ENCODE measurements at regions of chr2 and their contacts with region 1.

Region 1: GRCh38 chr2:73828818-73829570 is at the start of gene STAMBP:
- DNase-seq: peak; percentile 95
- H3K4me3 Mint-ChIP-seq: peak within 1 kb of the TSS; percentile 96
- H3K27ac Mint-ChIP-seq: peak within 1 kb of the TSS; percentile 97
- H3K4me1 Mint-ChIP-seq: peaks cover 46% of the 10 kb centered on the region
- H3K27me3 Mint-ChIP-seq: no peaks in the 10 kb centered on the region
- total RNA-seq, gene STAMBP: 37.2 to 38.4 TPM

Region 2: GRCh38 chr2:73700131-73700611 is 128.8 kb before region 1 on chr2:
- CTCF ChIA-PET with region 1: no interaction called
- POLR2A ChIA-PET with region 1: no interaction called
- DNase-seq: no peak
- H3K4me3 Mint-ChIP-seq: no peak overlapping the region
- H3K27ac Mint-ChIP-seq: no peak overlapping the region
- H3K4me1 Mint-ChIP-seq: no peaks in the 10 kb centered on the region
- H3K27me3 Mint-ChIP-seq: no peaks in the 10 kb centered on the region

Region 3: GRCh38 chr2:74147727-74148456 is 318.9 kb after region 1 on chr2 and contains the start of gene BOLA3:
- CTCF ChIA-PET with region 1: interaction called, 22 read pairs
- POLR2A ChIA-PET with region 1: no interaction called
- DNase-seq: peak; percentile 82
- H3K4me3 Mint-ChIP-seq: no peak within 1 kb of the TSS
- H3K27ac Mint-ChIP-seq: no peak within 1 kb of the TSS
- H3K4me1 Mint-ChIP-seq: peaks cover under 1% of the 10 kb centered on the region
- H3K27me3 Mint-ChIP-seq: no peaks in the 10 kb centered on the region
- total RNA-seq, gene BOLA3: 53.3 to 63.2 TPM

Measured in activated CD4-positive, alpha-beta T cell treated with anti-CD3 and anti-CD28 coated beads, Interleukin-2, amount 10 ng/mL, durations not matched to agents 7 days and 5 days (primary cell).